ENCODE measurements at regions of chr17 and their contacts with region 1.

Region 1: DNA sequence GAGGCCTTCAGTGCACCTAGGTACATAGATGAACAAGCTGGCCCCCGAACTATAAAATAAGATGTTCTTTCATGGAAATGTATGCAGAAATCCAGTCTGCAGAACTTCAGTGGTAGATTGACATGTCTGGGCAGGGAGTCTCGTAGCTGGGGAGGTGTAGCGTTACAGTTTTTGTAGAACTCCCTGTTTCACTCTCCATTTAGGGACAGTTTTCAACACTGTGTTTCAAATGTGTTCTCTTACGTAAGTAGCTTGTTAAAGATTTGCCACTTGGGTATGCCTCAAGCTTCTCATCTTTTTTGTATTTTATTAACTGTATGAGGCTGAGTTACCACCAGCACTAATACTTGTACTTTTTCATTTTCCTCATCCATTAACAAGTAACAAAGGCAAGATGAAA is 46.6 kb downstream of the PLD6 start:
- DNase-seq: no peak
- ATAC-seq: peak; percentile 67 to 88
- H3K4me3 ChIP-seq: no peak overlapping the region
- H3K27ac ChIP-seq: peak overlapping the region; percentile 17 to 76 (median 63)
- H3K4me1 ChIP-seq: peaks cover 17 to 31% of the 10 kb centered on the region in 2 donors
- H3K27me3 ChIP-seq: no peaks in the 10 kb centered on the region
- CTCF ChIP-seq: no peak
- POLR2A ChIP-seq: no peak

Region 2: GRCh38 chr17:17141860-17142552 is 17.6 kb before region 1 on chr17:
- in situ Hi-C with region 1: no loop called
- intact Hi-C with region 1: no loop called
- DNase-seq: no peak
- ATAC-seq: peak in 1 of 2 donors; percentile 41
- H3K4me3 ChIP-seq: no peak overlapping the region
- H3K27ac ChIP-seq: peak overlapping the region in 2 of 4 donors; percentile 21 to 45
- H3K4me1 ChIP-seq: peaks cover 19 to 27% of the 10 kb centered on the region in 2 donors
- H3K27me3 ChIP-seq: no peaks in the 10 kb centered on the region
- CTCF ChIP-seq: peak; percentile 70 to 83 (median 81)
- POLR2A ChIP-seq: no peak

Region 3: GRCh38 chr17:17175902-17176301 is 16.3 kb after region 1 on chr17:
- in situ Hi-C with region 1: no loop called
- intact Hi-C with region 1: loop called (anchors 2 kb)
- DNase-seq: no peak
- ATAC-seq: no peak
- H3K4me3 ChIP-seq: no peak overlapping the region
- H3K27ac ChIP-seq: peak overlapping the region in 1 of 4 donors; percentile 5
- H3K4me1 ChIP-seq: peaks cover 3 to 6% of the 10 kb centered on the region in 2 donors
- H3K27me3 ChIP-seq: no peaks in the 10 kb centered on the region
- CTCF ChIP-seq: no peak
- POLR2A ChIP-seq: no peak